Natural killer cell (primary cell): ENCODE measurements at regions of chr20 and their contacts with region 1.

Region 1: DNA sequence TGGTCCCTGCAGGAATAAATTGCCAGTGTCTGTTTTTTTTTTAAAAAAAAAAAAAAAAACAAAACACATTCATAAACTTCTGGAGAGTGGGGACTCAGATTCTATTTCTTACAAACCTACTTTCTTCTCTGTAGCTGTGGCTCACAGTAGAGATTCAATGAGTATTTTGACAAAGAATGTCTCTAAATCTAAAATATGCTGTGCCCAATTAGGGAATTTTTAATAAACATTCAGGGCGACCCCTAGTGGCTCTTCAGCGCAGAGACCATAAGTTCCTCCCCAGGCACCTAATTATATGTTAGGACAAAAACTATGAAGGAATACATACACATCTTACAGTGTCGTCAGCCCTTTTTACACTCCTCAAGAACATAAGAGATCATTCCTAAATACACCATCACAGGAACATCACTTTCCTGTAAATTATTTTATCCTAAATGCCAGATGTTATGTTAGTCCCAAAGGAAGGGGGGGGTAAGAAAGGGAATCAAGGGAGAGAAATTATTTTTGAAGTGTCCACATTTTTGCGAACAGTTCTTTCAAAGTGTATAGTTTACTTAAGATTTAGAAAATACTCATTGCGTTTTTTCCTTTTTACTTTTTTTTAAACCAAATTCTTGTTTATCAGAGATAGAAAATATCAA is 21.8 kb upstream of the NAA20 start:
- DNase-seq: peak in 1 of 2 donors; percentile 72
- ATAC-seq: peak in 2 of 3 donors; percentile 58 to 65
- H3K4me3 ChIP-seq: no peak overlapping the region
- H3K4me3 Mint-ChIP-seq: no peak overlapping the region
- H3K27ac ChIP-seq: no peak overlapping the region
- H3K27ac Mint-ChIP-seq: no peak overlapping the region
- H3K4me1 ChIP-seq: peaks cover 5% of the 10 kb centered on the region
- H3K4me1 Mint-ChIP-seq: peaks cover 0 to 5% of the 10 kb centered on the region in 2 donors
- H3K27me3 ChIP-seq: no peaks in the 10 kb centered on the region
- H3K27me3 Mint-ChIP-seq: peaks cover 10 to 25% of the 10 kb centered on the region in 2 donors
- CTCF ChIP-seq: peak; percentile 78

Region 2: GRCh38 chr20:19692685-19693119 is 302.6 kb before region 1 on chr20:
- intact Hi-C with region 1: loop called (anchors 1 kb)
- DNase-seq: peak; percentile 31 to 56
- ATAC-seq: peak in 1 of 3 donors; percentile 46
- H3K4me3 ChIP-seq: no peak overlapping the region
- H3K4me3 Mint-ChIP-seq: no peak overlapping the region
- H3K27ac ChIP-seq: no peak overlapping the region
- H3K27ac Mint-ChIP-seq: no peak overlapping the region
- H3K4me1 ChIP-seq: peaks cover 3% of the 10 kb centered on the region
- H3K4me1 Mint-ChIP-seq: peaks cover 0 to 7% of the 10 kb centered on the region in 2 donors
- H3K27me3 ChIP-seq: no peaks in the 10 kb centered on the region
- H3K27me3 Mint-ChIP-seq: peaks cover 13 to 14% of the 10 kb centered on the region in 2 donors
- CTCF ChIP-seq: peak; percentile 93

Region 3: GRCh38 chr20:19784511-19785172 is 210.7 kb before region 1 on chr20:
- intact Hi-C with region 1: loop called (anchors 1 kb)
- DNase-seq: peak in 1 of 2 donors; percentile 41
- ATAC-seq: peak in 2 of 3 donors; percentile 40 to 60
- H3K4me3 ChIP-seq: no peak overlapping the region
- H3K4me3 Mint-ChIP-seq: no peak overlapping the region
- H3K27ac ChIP-seq: no peak overlapping the region
- H3K27ac Mint-ChIP-seq: no peak overlapping the region
- H3K4me1 ChIP-seq: no peaks in the 10 kb centered on the region
- H3K4me1 Mint-ChIP-seq: peaks cover 0 to 6% of the 10 kb centered on the region in 2 donors
- H3K27me3 ChIP-seq: no peaks in the 10 kb centered on the region
- H3K27me3 Mint-ChIP-seq: peaks cover 9% of the 10 kb centered on the region in 2 donors
- CTCF ChIP-seq: peak; percentile 57

Region 4: DNA sequence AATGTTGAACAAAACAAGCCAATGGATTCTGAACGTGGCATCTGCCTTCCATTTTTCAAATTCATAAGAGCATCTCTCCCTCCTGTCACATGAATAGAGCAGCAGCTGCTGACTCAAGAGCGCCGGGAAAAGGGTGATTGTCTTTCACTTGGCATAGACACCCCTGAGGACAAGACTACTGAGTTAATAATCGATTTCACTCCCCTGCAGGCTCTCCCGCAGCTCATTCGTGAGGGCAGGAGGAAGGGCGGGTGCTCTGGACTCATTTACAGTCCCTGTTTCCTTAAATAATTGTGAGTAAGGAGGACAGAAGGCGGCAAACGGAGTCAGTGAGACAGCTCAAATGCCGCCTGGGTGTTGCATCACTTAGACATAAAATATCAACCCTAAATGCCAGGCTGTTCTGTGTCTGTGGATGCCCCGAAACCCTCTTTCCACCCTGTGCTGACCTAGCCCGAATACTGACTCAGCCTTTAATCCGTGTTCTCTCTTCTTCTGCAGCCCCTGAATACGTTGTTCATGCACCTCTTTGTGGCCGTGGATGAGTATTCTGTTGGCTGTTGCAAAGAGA is 78.5 kb after region 1 on chr20:
- intact Hi-C with region 1: no loop called
- DNase-seq: no peak
- ATAC-seq: no peak
- H3K4me3 ChIP-seq: no peak overlapping the region
- H3K4me3 Mint-ChIP-seq: no peak overlapping the region
- H3K27ac ChIP-seq: no peak overlapping the region
- H3K27ac Mint-ChIP-seq: no peak overlapping the region
- H3K4me1 ChIP-seq: no peaks in the 10 kb centered on the region
- H3K4me1 Mint-ChIP-seq: no peaks in the 10 kb centered on the region
- H3K27me3 ChIP-seq: no peaks in the 10 kb centered on the region
- H3K27me3 Mint-ChIP-seq: peaks cover 12 to 15% of the 10 kb centered on the region in 2 donors
- CTCF ChIP-seq: no peak

Region 5: DNA sequence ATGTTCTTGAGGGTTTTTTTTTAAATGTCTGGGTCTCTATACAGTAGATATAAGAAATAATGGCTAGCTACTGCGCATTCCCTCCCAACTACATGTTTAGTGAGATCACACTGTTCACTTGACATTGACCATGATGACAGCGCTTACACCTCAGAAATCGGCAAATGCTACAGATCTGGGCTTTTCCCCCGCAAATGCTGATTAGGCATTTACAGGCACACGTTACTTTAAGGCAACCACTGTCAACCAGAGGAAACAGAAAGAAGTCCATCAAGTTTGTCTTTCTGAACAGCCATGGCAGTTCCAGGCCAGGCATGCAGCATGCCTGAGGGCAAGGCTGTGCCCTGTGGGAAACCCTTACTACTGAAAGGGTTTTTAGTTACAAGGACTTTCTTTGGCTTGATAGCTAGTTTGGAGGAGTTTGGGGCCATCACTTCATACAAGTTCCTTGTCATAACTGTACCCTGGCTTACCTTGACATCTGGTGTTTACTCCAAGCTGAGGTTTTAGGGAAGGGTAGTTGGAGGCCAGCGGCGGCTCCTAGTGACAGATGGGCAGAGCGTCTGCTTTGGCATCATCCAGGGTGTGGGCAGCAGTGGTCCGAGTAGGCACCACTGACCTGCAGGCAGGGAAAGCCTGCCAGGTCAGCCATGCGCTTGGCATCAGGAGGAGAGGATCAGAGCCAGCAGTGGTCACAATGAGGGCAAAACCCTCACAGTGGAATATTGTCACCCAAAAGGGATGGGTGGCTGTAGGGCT is 100.0 kb after region 1 on chr20:
- intact Hi-C with region 1: no loop called
- DNase-seq: no peak
- ATAC-seq: no peak
- H3K4me3 ChIP-seq: no peak overlapping the region
- H3K4me3 Mint-ChIP-seq: no peak overlapping the region
- H3K27ac ChIP-seq: no peak overlapping the region
- H3K27ac Mint-ChIP-seq: peak overlapping the region in 1 of 2 donors; percentile 49
- H3K4me1 ChIP-seq: no peaks in the 10 kb centered on the region
- H3K4me1 Mint-ChIP-seq: peaks cover 0 to 11% of the 10 kb centered on the region in 2 donors
- H3K27me3 ChIP-seq: no peaks in the 10 kb centered on the region
- H3K27me3 Mint-ChIP-seq: peaks cover 2 to 12% of the 10 kb centered on the region in 2 donors
- CTCF ChIP-seq: no peak

Region 6: GRCh38 chr20:20174089-20174836 is 178.9 kb after region 1 on chr20:
- intact Hi-C with region 1: no loop called
- DNase-seq: no peak
- ATAC-seq: no peak
- H3K4me3 ChIP-seq: no peak overlapping the region
- H3K4me3 Mint-ChIP-seq: no peak overlapping the region
- H3K27ac ChIP-seq: no peak overlapping the region
- H3K27ac Mint-ChIP-seq: no peak overlapping the region
- H3K4me1 ChIP-seq: no peaks in the 10 kb centered on the region
- H3K4me1 Mint-ChIP-seq: peaks cover 18% of the 10 kb centered on the region in 2 donors
- H3K27me3 ChIP-seq: no peaks in the 10 kb centered on the region
- H3K27me3 Mint-ChIP-seq: no peaks in the 10 kb centered on the region
- CTCF ChIP-seq: no peak